Naive thymus-derived CD4-positive, alpha-beta T cell (primary cell): ENCODE measurements at regions of chr2 and their contacts with region 1.

Region 1: DNA sequence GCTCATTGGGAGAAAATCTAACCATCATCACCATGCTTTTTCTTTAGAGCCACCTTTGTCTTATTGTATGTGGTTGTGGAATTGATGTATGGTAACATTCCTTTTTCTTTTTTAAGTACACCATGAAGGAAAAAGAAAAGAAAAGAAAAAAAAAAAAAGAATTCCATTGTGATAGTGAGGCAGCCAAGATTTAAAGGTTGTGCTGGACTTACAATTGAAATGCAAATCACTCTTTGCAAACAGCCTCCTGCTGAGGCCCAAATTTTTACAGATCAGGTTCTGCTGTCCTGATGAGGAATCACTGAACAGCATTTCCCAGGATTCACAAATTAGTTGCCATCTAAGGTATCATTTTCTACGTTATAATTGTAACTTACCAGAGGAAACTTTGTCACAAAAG is 1101.0 kb upstream of the FANCL start:
- DNase-seq: no peak
- ATAC-seq: no peak
- H3K4me3 ChIP-seq: no peak overlapping the region
- H3K4me3 Mint-ChIP-seq: no peak overlapping the region
- H3K27ac ChIP-seq: no peak overlapping the region
- H3K27ac Mint-ChIP-seq: no peak overlapping the region
- H3K4me1 ChIP-seq: no peaks in the 10 kb centered on the region
- H3K4me1 Mint-ChIP-seq: peaks cover 0 to 2% (median 0%) of the 10 kb centered on the region in 7 donors
- H3K27me3 ChIP-seq: no peaks in the 10 kb centered on the region
- H3K27me3 Mint-ChIP-seq: peaks cover 0 to 3% (median 0%) of the 10 kb centered on the region in 5 donors

Region 2: GRCh38 chr2:59398081-59398480 is 55.9 kb after region 1 on chr2:
- CTCF ChIA-PET with region 1: no interaction called
- POLR2A ChIA-PET with region 1: no interaction called
- intact Hi-C with region 1: no loop called
- DNase-seq: no peak
- ATAC-seq: no peak
- H3K4me3 ChIP-seq: no peak overlapping the region
- H3K4me3 Mint-ChIP-seq: no peak overlapping the region
- H3K27ac ChIP-seq: no peak overlapping the region
- H3K27ac Mint-ChIP-seq: no peak overlapping the region
- H3K4me1 ChIP-seq: no peaks in the 10 kb centered on the region
- H3K4me1 Mint-ChIP-seq: no peaks in the 10 kb centered on the region
- H3K27me3 ChIP-seq: no peaks in the 10 kb centered on the region
- H3K27me3 Mint-ChIP-seq: peaks cover 0 to 6% (median 0%) of the 10 kb centered on the region in 5 donors

Region 3: GRCh38 chr2:61055557-61055956 is 1713.4 kb after region 1 on chr2:
- CTCF ChIA-PET with region 1: no interaction called
- POLR2A ChIA-PET with region 1: no interaction called
- intact Hi-C with region 1: loop called in 1 of 2 experiments (anchors 10 kb)
- DNase-seq: peak in 1 of 9 donors; percentile 2
- ATAC-seq: peak; percentile 18
- H3K4me3 ChIP-seq: no peak overlapping the region
- H3K4me3 Mint-ChIP-seq: no peak overlapping the region
- H3K27ac ChIP-seq: no peak overlapping the region
- H3K27ac Mint-ChIP-seq: peak overlapping the region in 2 of 9 donors; percentile 9 to 47
- H3K4me1 ChIP-seq: no peaks in the 10 kb centered on the region
- H3K4me1 Mint-ChIP-seq: peaks cover 0 to 7% (median 5%) of the 10 kb centered on the region in 7 donors
- H3K27me3 ChIP-seq: no peaks in the 10 kb centered on the region
- H3K27me3 Mint-ChIP-seq: no peaks in the 10 kb centered on the region